ENCODE measurements at regions of chr12 and their contacts with region 1.

Region 1: GRCh38 chr12:58425481-58426392 is 484.4 kb downstream of the ATP23 start:
- DNase-seq: no peak
- H3K4me3 ChIP-seq: peak overlapping the region in 2 of 3 experiments; percentile 6 to 51
- H3K27ac ChIP-seq: peak overlapping the region; percentile 80
- H3K4me1 ChIP-seq: peaks cover 31% of the 10 kb centered on the region
- H3K27me3 ChIP-seq: no peaks in the 10 kb centered on the region
- CTCF ChIP-seq: no peak

Region 2: GRCh38 chr12:58171914-58172313 is 253.8 kb before region 1 on chr12:
- dilution Hi-C with region 1: no loop called
- DNase-seq: no peak
- H3K4me3 ChIP-seq: no peak overlapping the region
- H3K27ac ChIP-seq: no peak overlapping the region
- H3K4me1 ChIP-seq: no peaks in the 10 kb centered on the region
- H3K27me3 ChIP-seq: no peaks in the 10 kb centered on the region
- CTCF ChIP-seq: no peak

Region 3: GRCh38 chr12:58346032-58346632 is 79.6 kb before region 1 on chr12:
- dilution Hi-C with region 1: loop called (anchors 25 kb)
- DNase-seq: no peak
- H3K4me3 ChIP-seq: no peak overlapping the region
- H3K27ac ChIP-seq: no peak overlapping the region
- H3K4me1 ChIP-seq: no peaks in the 10 kb centered on the region
- H3K27me3 ChIP-seq: no peaks in the 10 kb centered on the region
- CTCF ChIP-seq: peak in 2 of 3 experiments; percentile 53 to 56

Region 4: GRCh38 chr12:58750484-58750883 is 324.7 kb after region 1 on chr12:
- dilution Hi-C with region 1: no loop called
- DNase-seq: peak; percentile 59
- H3K4me3 ChIP-seq: no peak overlapping the region
- H3K27ac ChIP-seq: peak overlapping the region; percentile 2
- H3K4me1 ChIP-seq: no peaks in the 10 kb centered on the region
- H3K27me3 ChIP-seq: no peaks in the 10 kb centered on the region
- CTCF ChIP-seq: no peak